Activated naive CD4-positive, alpha-beta T cell treated with anti-CD3 and anti-CD28 coated beads, Interleukin-2, amount 10 ng/mL, durations not matched to agents 7 days and 5 days (primary cell): ENCODE measurements at regions of chr9 and their contacts with region 1.

Region 1: DNA sequence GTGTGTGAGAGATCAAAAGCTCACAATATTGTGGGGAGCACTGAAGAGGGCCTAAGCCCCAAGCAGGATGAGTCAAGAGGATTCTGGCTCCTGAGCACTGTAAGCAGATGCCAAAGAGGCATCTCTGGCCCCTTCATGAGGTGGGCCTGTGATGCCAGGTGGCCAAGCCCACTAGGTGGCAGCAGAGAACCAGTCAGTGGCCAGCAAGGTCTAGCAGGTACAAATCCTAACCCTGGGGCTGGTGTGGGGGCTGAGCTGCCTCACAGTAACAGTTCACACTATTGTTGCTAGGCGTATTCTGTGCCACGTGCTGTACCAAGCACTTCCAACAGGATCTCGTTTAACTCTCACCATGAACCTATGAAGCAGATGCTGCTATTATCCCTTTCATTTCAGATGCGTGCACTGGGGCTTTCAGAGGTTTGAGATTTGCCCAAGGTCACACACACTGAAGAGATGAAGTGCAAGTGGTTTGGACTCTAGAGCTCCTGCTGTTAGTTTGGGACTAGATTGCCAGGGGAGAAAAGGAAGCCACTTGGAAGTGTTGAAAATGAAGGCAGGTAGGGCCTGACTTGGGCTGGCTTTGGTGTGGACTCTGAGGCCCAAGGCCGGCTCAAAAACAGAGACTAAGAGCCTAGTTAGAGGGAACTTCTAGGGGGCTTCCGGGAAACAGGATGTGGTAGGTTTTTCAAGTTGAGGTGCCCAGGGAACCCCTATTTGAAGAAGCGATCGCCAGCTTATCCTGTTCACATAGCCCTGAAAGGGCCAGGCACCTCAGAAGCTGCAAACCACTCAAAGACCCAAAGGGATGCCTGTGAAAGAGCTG is 4.4 kb upstream of the MLANA start:
- DNase-seq: peak; percentile 88
- H3K4me3 Mint-ChIP-seq: no peak overlapping the region
- H3K27ac Mint-ChIP-seq: no peak overlapping the region
- H3K4me1 Mint-ChIP-seq: peaks cover 11% of the 10 kb centered on the region
- H3K27me3 Mint-ChIP-seq: peaks cover 7% of the 10 kb centered on the region

Region 2: DNA sequence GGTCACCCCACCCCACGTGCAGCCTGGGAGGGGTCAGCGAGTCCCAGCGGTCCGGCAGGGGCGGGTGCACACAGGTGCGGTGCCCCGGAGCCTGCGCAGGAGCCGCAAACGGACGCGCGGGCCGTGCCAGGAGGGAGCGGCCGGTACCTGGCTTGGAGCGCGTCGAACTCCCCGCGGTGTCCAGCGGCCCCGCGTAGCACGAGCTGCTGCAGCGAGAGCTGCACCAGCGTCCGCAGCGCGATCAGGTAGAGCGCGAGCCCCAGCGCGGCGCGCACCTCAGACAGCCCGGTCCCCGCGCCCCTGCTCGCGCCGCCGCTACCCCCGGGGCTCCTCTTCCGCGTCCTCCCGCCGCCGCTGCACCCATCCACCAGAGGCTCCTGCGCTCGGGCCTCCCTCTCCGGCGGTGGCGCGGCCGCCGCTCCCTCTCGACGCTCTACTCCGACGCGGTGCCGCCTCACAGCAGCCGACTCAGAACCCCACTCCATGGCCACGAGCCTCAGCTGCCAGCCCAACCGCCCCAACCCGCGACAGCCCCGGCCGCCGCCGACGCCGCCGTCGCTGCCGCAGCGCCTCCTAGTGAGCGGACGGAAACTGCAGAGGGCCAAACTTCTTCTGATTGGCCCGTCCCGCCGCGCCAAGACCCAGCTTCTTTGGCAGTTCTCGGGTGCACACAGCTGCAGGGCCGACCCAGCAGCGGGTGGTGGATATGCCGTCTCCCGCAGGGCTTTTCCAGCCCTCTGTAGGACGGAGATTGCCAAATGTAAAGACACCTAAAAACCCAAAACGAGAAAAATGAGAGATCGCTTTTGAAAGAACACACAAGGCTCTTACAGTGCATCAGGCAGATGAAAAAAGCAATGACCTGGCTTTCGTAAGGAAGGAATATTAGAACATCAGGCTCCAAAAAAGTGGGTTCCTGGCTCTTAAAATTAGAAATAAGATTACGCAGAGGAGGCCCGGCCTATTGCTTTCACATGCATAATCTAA is 53.5 kb before region 1 on chr9 and contains the start of gene ERMP1:
- CTCF ChIA-PET with region 1: interaction called, 22 read pairs
- DNase-seq: peak; percentile 91
- H3K4me3 Mint-ChIP-seq: peak within 1 kb of the TSS; percentile 93
- H3K27ac Mint-ChIP-seq: peak within 1 kb of the TSS; percentile 90
- H3K4me1 Mint-ChIP-seq: peaks cover 46% of the 10 kb centered on the region
- H3K27me3 Mint-ChIP-seq: peaks cover 9% of the 10 kb centered on the region

Region 3: DNA sequence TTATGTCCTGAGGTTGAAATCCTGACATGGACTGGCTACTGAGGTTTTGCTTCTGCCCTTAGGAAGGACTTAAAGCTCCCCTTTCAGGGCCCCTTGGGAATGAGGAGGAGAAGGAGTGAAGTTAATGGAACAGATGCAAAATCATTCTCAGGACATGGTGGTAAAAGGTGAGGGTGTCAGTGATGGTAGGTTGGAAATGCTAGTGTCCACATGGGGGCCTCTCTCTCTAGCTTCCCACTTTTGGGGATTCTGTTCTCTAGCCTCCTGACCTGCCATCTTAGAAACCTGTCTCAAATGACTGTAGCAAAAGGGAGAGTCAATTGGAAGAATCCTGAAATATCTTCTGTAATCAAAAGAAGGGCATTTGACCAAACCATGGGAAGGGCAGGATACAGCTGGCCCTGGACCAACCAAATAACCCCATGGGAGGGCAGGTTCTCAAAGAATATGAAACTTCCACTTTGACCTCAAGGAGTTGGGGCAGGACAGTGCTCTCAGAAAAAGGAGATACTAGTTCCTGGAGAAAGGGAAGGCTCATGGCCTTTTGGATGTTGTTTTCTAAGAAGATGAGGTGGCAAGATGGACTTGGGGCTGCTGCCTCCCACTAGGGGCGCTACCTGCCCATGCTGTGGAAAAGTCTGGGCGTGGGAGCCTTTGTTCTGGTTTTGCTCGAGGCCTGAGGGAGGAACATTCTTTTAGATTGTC is 16.9 kb before region 1 on chr9:
- CTCF ChIA-PET with region 1: interaction called, 21 read pairs
- DNase-seq: peak; percentile 45
- H3K4me3 Mint-ChIP-seq: no peak overlapping the region
- H3K27ac Mint-ChIP-seq: no peak overlapping the region
- H3K4me1 Mint-ChIP-seq: peaks cover 15% of the 10 kb centered on the region
- H3K27me3 Mint-ChIP-seq: no peaks in the 10 kb centered on the region

Region 4: GRCh38 chr9:5899292-5899691 is 13.0 kb after region 1 on chr9:
- CTCF ChIA-PET with region 1: interaction called, 41 read pairs
- DNase-seq: peak; percentile 28
- H3K4me3 Mint-ChIP-seq: no peak overlapping the region
- H3K27ac Mint-ChIP-seq: no peak overlapping the region
- H3K4me1 Mint-ChIP-seq: peaks cover 2% of the 10 kb centered on the region
- H3K27me3 Mint-ChIP-seq: no peaks in the 10 kb centered on the region

Region 5: GRCh38 chr9:6049798-6050197 is 163.5 kb after region 1 on chr9:
- CTCF ChIA-PET with region 1: interaction called, 59 read pairs
- DNase-seq: peak; percentile 60
- H3K4me3 Mint-ChIP-seq: no peak overlapping the region
- H3K27ac Mint-ChIP-seq: no peak overlapping the region
- H3K4me1 Mint-ChIP-seq: peaks cover 8% of the 10 kb centered on the region
- H3K27me3 Mint-ChIP-seq: peaks cover 22% of the 10 kb centered on the region

Region 6: GRCh38 chr9:6055213-6055612 is 168.9 kb after region 1 on chr9:
- CTCF ChIA-PET with region 1: interaction called, 59 read pairs
- DNase-seq: peak; percentile 53
- H3K4me3 Mint-ChIP-seq: no peak overlapping the region
- H3K27ac Mint-ChIP-seq: no peak overlapping the region
- H3K4me1 Mint-ChIP-seq: peaks cover 5% of the 10 kb centered on the region
- H3K27me3 Mint-ChIP-seq: peaks cover 24% of the 10 kb centered on the region

Region 7: GRCh38 chr9:6126374-6126773 is 240.0 kb after region 1 on chr9:
- CTCF ChIA-PET with region 1: no interaction called
- DNase-seq: no peak
- H3K4me3 Mint-ChIP-seq: no peak overlapping the region
- H3K27ac Mint-ChIP-seq: no peak overlapping the region
- H3K4me1 Mint-ChIP-seq: no peaks in the 10 kb centered on the region
- H3K27me3 Mint-ChIP-seq: peaks cover 13% of the 10 kb centered on the region

Region 8: GRCh38 chr9:6305954-6306563 is 419.7 kb after region 1 on chr9:
- CTCF ChIA-PET with region 1: interaction called, 18 read pairs
- DNase-seq: no peak
- H3K4me3 Mint-ChIP-seq: no peak overlapping the region
- H3K27ac Mint-ChIP-seq: no peak overlapping the region
- H3K4me1 Mint-ChIP-seq: no peaks in the 10 kb centered on the region
- H3K27me3 Mint-ChIP-seq: peaks cover 9% of the 10 kb centered on the region